Posterior cingulate gyrus (tissue), 11 donors: ENCODE measurements at regions of chr12 and their contacts with region 1.

Region 1: DNA sequence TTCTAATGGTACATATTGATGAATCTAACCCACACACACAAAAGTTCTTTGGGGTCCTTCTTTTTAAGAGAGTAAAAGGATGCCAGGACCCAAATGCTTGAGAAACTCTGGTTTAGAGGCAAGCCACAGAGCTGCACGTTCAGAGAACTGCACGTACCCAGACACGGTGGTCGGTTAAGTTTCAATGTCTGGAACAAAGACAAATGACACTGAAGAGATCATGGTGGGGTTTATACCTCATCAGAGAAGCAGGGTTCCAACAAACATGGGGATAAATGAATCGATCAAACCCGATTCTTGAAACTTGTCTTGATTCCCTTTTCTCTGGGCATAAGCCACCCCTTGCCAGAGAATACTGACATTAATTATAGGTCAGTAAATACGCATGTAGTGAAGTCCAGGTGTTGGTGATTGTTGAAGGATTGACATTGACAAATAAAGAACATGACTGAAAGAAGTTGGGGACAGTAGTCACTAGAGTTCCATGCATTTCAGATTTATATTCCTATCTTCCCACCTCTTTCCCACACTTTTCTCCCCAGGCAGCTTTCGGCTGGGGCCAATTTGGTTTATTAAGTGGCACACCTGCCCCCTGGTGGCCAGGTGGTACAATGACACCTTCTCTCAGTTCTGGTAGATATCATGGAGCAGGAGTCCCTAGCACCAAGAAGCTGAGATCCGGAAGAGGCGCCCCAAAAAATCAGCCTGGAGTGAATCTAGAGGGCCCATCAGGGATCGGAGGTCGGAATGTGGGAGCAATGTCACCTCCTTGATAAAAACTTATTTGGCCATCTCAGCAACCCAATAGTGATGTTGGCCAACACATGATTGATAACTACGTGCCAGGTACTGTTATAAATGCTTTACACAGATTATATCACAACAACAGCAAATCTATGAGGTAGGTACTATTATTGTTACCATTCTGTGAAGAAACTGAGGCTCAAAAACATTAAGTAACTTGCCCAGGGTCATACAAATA is 17.8 kb upstream of the HDAC7 start:
- DNase-seq: peak in 7 of 10 donors; percentile 58 to 93 (median 71)

Region 2: GRCh38 chr12:47651368-47652254 is 185.9 kb before region 1 on chr12:
- intact Hi-C with region 1: loop called (anchors 5 kb)
- DNase-seq: peak; percentile 42 to 95 (median 68)

Region 3: DNA sequence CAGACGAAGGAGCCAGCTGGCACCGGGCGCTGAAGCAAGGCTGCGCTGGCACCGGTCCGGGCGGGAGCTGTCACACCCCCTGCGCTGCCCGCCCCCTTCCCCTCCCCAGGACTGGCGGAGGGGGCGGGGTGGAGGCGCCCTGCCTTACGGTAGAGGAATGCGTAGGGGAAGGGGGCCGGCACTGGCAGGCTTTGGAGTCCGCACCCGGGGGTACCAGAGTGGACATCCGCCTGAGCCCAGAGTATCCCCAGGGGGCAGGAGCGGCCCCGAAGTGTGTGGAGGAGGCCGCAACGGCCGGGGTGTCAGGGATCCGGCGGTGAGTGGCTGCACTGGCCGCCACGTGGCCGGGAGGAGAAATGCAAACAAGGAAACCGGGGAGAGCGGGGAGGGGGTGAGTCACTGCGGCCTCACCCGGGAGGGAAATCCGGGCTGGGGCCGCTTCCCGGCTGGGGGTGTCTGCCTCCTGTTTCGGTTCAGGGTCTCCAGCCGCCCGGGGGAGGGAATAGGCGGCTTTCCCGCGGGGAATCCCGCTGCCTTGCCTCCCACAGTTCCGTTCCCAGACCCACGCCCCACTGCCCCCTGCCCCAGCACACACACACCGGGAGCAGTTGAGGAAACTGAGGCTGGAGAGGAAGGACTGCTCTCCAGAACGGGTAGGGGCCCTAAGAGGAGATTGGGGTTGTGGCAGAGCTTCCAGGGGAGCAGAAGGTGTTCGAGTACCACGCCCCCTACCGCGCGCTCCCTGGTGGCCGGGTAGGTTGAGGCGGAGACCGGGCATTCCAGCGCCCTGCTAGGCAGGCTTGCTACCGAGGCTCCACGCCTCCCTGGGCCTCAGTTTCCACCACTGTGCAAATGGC is 78.4 kb before region 1 on chr12 and contains the start of gene RAPGEF3:
- intact Hi-C with region 1: no loop called
- DNase-seq: peak; percentile 78 to 98 (median 85)

Region 4: DNA sequence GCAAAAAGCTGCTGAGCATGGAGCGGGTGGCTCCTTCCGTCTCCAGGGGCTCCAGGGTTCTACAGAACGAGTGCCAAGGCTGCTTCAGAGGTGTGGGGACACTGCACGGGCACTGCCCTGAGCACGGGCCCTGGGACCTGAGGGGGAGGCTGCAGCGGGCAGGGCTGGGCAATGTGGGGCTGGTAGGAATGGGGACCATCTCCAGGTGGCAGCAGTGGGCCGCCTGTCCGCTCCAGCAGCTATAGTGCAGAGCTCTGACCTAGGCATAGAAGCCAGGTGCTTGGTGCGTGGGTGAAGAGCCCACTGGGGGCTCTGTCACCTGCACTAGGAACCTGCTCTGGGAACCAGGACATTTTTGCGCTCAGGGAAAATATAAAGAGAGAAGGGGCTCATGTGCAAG is 40.0 kb before region 1 on chr12:
- intact Hi-C with region 1: loop called (anchors 2 kb)
- DNase-seq: peak in 4 of 10 donors; percentile 53 to 80 (median 61)